Sciatic nerve (tissue), 2 donors: ENCODE measurements at regions of chr2 and their contacts with region 1.

Region 1: GRCh38 chr2:112941753-112942658 is 31.0 kb downstream of the IL37 start:
- DNase-seq: peak; percentile 79
- ATAC-seq: peak; percentile 48

Region 2: GRCh38 chr2:112749755-112750559 is 192.0 kb before region 1 on chr2:
- intact Hi-C with region 1: loop called (anchors 10 kb)
- DNase-seq: peak; percentile 83
- ATAC-seq: peak; percentile 57